ENCODE measurements at regions of chr1 and their contacts with region 1.

Region 1: GRCh38 chr1:160108888-160109662 is 6.5 kb upstream of the ATP1A2 start:
- DNase-seq: peak; percentile 38 to 73 (median 68)
- H3K4me3 ChIP-seq: no peak overlapping the region
- H3K27ac ChIP-seq: no peak overlapping the region
- H3K4me1 ChIP-seq: peaks cover 0 to 8% (median 0%) of the 10 kb centered on the region in 4 experiments
- H3K27me3 ChIP-seq: no peaks in the 10 kb centered on the region

Region 2: DNA sequence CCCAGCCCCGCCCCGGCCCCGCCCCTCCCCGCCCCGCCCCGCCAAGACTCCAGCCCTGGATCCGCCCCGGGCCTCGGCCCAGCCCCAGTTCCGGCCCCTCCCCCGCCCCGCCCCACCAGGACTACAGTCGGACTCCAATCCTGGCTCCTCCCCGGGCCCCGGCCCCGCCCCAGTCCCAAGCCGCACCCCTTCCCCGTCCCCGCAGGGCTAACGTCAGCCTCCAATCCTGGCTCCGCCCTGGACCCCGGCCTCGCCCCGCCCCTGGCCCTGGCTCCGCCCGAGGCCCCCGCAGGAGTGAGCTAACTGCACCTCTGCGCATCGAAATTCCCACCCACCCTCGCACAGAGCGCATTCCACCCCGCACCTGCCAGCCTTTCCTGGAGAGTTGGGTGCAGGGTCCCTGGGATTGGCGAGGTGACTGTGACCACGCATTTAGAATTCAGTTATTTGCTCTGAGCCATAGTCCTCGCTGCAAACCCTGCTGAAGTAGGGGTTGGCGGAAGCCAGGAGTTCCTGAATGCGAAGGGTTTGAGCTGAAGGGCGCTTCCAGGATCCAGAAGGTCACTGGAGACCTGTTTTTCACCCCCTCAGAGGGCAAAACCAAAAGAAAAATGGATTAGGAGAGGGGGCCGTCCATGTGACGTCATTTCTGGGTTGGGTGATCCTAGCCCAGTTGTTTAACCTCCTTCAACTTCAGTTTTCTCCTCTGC is 10.1 kb before region 1 on chr1:
- CTCF ChIA-PET with region 1: interaction called, 15 read pairs
- POLR2A ChIA-PET with region 1: no interaction called
- DNase-seq: peak; percentile 92 to 96 (median 95)
- H3K4me3 ChIP-seq: peak overlapping the region; percentile 37 to 89 (median 71)
- H3K27ac ChIP-seq: peak overlapping the region; percentile 41 to 87
- H3K4me1 ChIP-seq: peaks cover 0 to 48% (median 35%) of the 10 kb centered on the region in 4 experiments
- H3K27me3 ChIP-seq: no peaks in the 10 kb centered on the region

Measured in common myeloid progenitor, CD34-positive (primary cell).